ENCODE measurements at regions of chr4 and their contacts with region 1.

Region 1: GRCh38 chr4:163544407-163545038 is 50.0 kb downstream of the TMA16 start:
- DNase-seq: peak; percentile 76
- ATAC-seq: peak; percentile 86

Region 2: DNA sequence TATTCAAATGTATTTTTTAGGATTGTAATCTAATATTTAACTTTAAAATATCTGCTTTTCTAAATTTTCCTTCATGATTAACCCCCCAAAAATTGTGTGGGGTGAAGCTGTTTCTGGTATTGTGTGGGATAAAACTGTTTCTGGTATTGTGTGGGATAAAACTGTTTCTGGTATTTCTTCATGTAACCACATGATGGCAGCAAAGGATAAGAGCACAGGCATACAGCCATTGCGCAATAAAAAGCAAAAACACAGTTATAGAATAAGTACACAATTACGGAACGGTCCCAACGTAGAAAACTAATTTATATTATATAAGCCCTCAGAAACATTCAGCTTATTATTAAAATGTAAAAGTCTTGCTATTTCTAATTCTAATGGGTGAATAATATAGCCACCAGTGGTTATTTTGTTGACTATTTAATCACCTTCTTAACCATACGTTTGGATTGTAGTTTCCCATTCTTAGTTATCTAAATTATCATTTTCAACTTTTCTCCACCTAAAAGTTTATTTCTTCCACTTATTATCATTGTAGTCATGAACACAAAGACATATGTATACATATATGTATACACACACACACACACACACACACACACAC is 1046.9 kb before region 1 on chr4:
- intact Hi-C with region 1: loop called (anchors 5 kb)
- DNase-seq: no peak
- ATAC-seq: peak; percentile 93

Region 3: DNA sequence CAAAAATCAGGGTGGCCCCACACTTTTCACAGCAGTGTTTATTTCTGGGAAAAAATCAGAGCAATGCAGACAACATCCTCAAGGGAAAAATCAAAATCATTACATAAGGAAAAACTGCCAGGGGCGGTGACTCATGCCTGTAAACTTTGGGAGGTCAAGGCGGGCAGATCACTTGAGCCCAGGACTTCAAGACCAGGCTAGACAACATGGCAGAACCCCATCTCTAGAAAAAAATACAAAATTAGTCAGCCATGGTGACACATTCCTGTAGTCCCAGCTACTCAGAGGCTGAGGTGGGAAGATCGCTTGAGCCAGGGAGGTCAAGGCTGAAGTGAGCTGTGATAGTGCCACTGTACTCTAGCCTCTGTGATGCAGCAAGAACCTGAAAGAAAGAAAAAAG is 480.6 kb before region 1 on chr4:
- intact Hi-C with region 1: no loop called
- DNase-seq: no peak
- ATAC-seq: no peak

Region 4: GRCh38 chr4:163484906-163485305 is 59.6 kb before region 1 on chr4:
- intact Hi-C with region 1: loop called (anchors 2 kb)
- DNase-seq: no peak
- ATAC-seq: no peak

Measured in Right ventricle myocardium superior (tissue), 1 donor.